Activated naive CD4-positive, alpha-beta T cell treated with anti-CD3 and anti-CD28 coated beads, Interleukin-2, amount 10 ng/mL, durations not matched to agents 7 days and 5 days (primary cell): ENCODE measurements at regions of chr21 and their contacts with region 1.

Region 1: DNA sequence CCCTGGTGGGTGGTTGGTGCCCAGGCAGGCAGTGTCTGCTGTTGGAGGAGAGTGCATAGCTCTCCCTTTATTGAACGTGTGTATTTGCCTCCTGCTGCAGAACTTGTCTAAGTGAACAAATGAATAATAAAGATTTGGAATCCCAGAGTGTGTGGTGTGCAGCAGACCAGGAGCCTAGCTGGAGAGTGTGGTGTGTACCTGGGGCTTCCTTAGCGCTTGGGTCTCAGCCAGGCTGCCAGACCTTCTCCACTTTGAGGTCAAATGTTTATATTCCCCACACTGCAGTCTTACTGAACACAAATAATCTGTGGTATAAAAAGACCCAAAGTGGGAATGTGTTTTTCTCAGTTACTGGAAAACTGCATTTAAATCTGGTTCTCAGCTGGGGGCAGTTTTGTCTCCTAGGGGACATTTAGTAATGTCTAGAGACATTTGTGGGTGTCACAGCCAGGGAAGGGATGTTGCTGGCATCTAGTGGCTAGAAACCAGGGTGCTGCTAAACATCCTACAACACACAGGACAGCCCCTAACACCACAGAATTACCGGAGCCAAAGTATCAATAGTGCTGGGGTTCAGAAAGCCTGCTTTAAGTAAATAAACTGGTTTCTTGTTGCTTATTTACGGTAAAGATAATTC is 23.6 kb downstream of the SLC37A1 start:
- DNase-seq: peak; percentile 62
- H3K4me3 Mint-ChIP-seq: no peak overlapping the region
- H3K27ac Mint-ChIP-seq: peak overlapping the region; percentile 24
- H3K4me1 Mint-ChIP-seq: peaks cover 18% of the 10 kb centered on the region
- H3K27me3 Mint-ChIP-seq: no peaks in the 10 kb centered on the region

Region 2: DNA sequence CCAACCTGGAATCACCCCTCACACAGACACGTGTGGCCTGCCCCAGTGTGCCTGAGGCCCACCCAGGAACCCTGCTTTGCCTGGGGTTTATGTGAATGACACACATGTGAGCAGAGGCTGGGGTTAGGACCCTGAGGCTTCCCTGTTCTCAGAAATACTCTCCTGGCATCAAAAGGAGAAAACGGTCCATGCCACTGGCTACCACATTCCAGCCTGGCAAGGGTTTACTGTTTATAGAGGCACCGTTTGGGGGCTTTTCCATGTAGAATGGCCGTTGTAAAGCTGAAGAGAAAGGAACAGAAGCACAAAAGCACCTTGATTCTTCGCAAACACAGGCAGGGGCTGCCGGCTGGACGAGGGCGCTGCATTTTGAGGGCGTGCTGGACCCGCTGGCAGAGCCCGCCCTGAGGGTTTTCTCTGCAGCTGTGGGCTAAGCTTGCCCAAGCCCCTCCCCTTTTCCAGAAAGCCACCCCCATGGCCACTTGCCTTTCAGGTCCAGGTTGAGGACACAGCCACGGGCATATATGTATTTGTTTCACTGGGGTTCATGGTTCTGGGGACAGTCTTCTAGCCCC is 235.1 kb before region 1 on chr21:
- CTCF ChIA-PET with region 1: no interaction called
- DNase-seq: no peak
- H3K4me3 Mint-ChIP-seq: no peak overlapping the region
- H3K27ac Mint-ChIP-seq: no peak overlapping the region
- H3K4me1 Mint-ChIP-seq: peaks cover 28% of the 10 kb centered on the region
- H3K27me3 Mint-ChIP-seq: peaks cover 15% of the 10 kb centered on the region

Region 3: GRCh38 chr21:42467140-42467983 is 69.9 kb before region 1 on chr21:
- CTCF ChIA-PET with region 1: interaction called, 18 read pairs
- DNase-seq: peak; percentile 46
- H3K4me3 Mint-ChIP-seq: no peak overlapping the region
- H3K27ac Mint-ChIP-seq: no peak overlapping the region
- H3K4me1 Mint-ChIP-seq: peaks cover 43% of the 10 kb centered on the region
- H3K27me3 Mint-ChIP-seq: peaks cover 45% of the 10 kb centered on the region